HEK293 (cell line): ENCODE measurements at regions of chr18 and their contacts with region 1.

Region 1: GRCh38 chr18:63578357-63578958 is 8.7 kb upstream of the SERPINB13 start:
- H3K4me3 ChIP-seq: no peak overlapping the region
- H3K27ac ChIP-seq: no peak overlapping the region
- H3K4me1 ChIP-seq: 0 out of 2 replicates have a peak, but pooled peaks cover 2% of the 10 kb centered on the region
- CTCF ChIP-seq: peak; percentile 67; the same call in 1 of the 2 replicates

Region 2: DNA sequence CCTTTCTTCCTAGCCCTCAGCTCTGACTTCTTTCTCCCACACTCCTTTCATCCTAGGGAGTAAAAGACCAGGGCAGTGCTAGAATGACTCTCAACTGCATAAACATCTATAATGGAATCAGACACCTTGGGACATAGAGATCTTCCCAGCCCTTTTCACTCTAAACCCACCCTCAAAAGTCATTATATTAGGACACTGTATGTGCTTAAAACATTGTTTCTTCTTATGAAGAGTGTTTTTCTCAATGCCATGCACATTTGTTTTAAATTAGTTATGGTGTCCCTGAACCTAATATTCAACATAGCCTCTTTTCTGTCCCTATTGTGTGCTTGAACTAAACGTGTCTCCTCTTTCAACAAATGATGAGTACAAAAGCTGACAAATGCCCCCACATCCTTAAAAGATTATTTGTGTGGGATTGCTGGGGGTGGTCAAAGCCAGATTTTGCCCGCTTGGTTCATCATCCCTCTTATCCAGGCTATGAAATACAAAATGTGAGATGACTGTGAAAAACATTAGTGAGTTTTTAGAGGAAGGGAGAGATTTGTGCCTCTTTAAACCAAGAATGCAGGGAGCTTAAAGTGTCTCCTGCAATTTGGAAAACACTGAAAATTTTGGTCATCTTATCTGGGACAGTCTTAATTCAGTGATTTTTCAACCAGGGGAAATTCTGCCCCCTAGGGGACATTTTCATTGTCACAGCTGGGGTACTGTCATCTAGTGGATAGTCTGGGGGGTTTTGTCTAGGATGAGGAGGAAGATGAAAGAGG is 72.7 kb before region 1 on chr18:
- CTCF ChIA-PET with region 1: interaction called, 338 read pairs
- POLR2A ChIA-PET with region 1: no interaction called
- H3K4me3 ChIP-seq: no peak overlapping the region
- H3K27ac ChIP-seq: no peak overlapping the region
- H3K4me1 ChIP-seq: no peaks in the 10 kb centered on the region
- CTCF ChIP-seq: 0 out of 2 replicates have a peak, but pooled peaks have one; percentile 27

Region 3: GRCh38 chr18:63523660-63524059 is 54.8 kb before region 1 on chr18:
- CTCF ChIA-PET with region 1: interaction called, 338 read pairs
- POLR2A ChIA-PET with region 1: no interaction called
- H3K4me3 ChIP-seq: no peak overlapping the region
- H3K27ac ChIP-seq: no peak overlapping the region
- H3K4me1 ChIP-seq: no peaks in the 10 kb centered on the region
- CTCF ChIP-seq: no peak

Region 4: DNA sequence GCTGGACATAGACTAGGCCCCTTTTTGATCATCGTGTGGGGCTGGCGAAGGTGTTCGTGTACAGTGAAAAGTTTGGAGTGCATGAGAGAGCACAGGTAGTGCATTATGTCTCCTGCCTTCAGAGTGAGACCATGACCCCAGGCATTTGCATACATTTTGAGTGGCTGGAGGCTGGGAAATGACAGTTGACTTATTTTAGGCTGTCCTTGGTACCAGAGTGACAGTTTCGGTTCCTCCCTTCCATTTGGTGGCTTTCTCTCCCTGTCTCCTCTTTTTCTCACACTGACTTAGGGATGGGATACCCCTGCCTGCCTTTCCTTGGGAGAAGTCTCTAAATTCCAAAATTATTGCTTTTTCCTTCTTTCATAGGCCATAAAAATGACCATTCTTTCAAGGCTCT is 16.2 kb before region 1 on chr18:
- CTCF ChIA-PET with region 1: interaction called, 88 read pairs
- POLR2A ChIA-PET with region 1: interaction called, 4 read pairs
- H3K4me3 ChIP-seq: no peak overlapping the region
- H3K27ac ChIP-seq: no peak overlapping the region
- H3K4me1 ChIP-seq: no peaks in the 10 kb centered on the region
- CTCF ChIP-seq: no peak

Region 5: GRCh38 chr18:63741769-63742168 is 163.3 kb after region 1 on chr18:
- CTCF ChIA-PET with region 1: interaction called, 10 read pairs
- POLR2A ChIA-PET with region 1: no interaction called
- H3K4me3 ChIP-seq: no peak overlapping the region
- H3K27ac ChIP-seq: no peak overlapping the region
- H3K4me1 ChIP-seq: no peaks in the 10 kb centered on the region
- CTCF ChIP-seq: no peak

Region 6: DNA sequence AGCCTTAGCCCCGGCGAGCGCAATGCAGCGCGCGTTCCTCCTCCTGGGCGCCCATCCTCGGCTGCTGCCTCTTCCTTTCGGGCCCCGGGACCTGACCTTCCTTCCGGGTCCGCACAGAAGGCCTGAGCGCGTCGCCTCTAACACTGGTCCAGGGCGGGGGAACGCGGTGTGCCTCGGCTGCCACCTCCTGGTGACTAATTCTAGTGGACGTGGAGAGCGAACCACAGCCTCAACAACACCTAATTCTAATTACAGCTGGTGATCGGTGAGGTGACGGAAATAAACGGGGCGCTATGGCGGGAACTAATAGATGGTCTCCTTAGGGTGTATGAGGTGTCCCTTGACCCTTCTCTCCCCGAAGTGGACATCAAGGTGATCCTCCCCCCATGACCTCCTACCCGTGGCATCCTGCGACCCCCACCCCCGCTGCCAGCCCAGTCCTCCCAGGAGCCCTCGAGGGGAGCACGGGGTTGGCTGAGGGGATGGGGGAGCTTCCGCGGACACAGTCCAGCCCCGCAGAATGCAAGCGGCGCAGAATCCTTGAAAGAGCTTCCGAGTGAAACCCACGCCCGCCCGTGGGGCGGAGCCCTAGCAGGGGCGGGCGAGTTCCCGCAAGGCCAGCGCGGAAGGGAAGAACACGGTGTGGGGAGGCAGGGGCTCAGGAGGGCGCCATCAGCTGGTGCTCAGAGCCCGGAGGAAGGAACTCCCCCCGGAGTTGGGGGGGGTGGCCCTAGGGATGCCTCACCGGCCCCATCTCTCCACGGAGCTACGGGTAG is 357.9 kb after region 1 on chr18:
- CTCF ChIA-PET with region 1: interaction called, 13 read pairs
- POLR2A ChIA-PET with region 1: no interaction called
- H3K4me3 ChIP-seq: peak overlapping the region; percentile 35
- H3K27ac ChIP-seq: no peak overlapping the region
- H3K4me1 ChIP-seq: no peaks in the 10 kb centered on the region
- CTCF ChIP-seq: peak; percentile 68; the same call in 1 of the 2 replicates

Region 7: GRCh38 chr18:65016631-65017371 is 1438.3 kb after region 1 on chr18:
- CTCF ChIA-PET with region 1: no interaction called
- POLR2A ChIA-PET with region 1: no interaction called
- H3K4me3 ChIP-seq: no peak overlapping the region
- H3K27ac ChIP-seq: no peak overlapping the region
- H3K4me1 ChIP-seq: no peaks in the 10 kb centered on the region
- CTCF ChIP-seq: no peak